ENCODE measurements at regions of chr12 and their contacts with region 1.

Region 1: DNA sequence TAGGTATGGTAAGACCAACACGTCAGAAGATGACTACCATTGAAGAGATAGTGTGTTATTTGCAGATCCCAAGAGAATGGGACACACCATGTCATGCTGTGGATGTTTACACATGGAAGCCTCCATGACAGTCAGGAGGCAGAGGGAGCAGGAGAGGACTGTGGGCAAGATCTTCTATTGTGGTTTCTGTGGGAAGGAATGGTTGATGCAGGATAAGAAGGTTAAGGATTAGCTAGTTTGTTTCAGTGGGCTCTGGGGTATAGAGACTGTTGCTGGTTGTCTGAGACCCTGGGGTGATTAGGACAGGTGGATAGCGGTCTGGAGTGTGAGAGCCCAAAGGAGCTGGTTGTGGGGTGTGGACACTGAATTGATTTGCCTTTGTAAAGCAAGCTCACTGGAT is 23.3 kb downstream of the TAS2R7 start:
- DNase-seq: no peak
- H3K4me3 ChIP-seq: no peak overlapping the region
- CTCF ChIP-seq: no peak

Region 2: DNA sequence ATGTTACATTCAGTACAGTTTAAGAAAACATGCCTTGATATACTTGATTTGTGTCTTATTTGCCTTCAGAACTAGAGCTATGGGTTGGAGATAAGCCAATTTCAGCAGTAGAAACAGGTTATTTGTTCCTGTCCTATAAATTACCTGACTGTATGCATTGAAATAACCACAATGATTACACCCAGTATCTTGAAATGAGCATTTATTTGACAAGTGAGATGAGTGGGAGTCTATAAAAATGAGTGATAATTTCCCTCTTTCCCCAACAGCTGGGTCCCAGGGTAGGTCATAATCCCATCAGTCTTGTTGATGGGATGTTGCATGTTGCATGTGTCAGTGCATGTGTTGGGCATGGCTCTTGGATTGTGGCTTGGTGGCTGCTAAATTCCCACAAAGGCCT is 403.9 kb after region 1 on chr12:
- in situ Hi-C with region 1: loop called (anchors 25 kb)
- DNase-seq: no peak
- H3K4me3 ChIP-seq: no peak overlapping the region
- CTCF ChIP-seq: no peak

Region 3: GRCh38 chr12:11486623-11487444 is 707.7 kb after region 1 on chr12:
- in situ Hi-C with region 1: loop called (anchors 25 kb)
- DNase-seq: peak; percentile 81
- H3K4me3 ChIP-seq: no peak overlapping the region
- CTCF ChIP-seq: peak; percentile 96

Measured in astrocyte of the cerebellum (primary cell).